Heart right ventricle (tissue), 16 donors: ENCODE measurements at regions of chr22 and their contacts with region 1.

Region 1: DNA sequence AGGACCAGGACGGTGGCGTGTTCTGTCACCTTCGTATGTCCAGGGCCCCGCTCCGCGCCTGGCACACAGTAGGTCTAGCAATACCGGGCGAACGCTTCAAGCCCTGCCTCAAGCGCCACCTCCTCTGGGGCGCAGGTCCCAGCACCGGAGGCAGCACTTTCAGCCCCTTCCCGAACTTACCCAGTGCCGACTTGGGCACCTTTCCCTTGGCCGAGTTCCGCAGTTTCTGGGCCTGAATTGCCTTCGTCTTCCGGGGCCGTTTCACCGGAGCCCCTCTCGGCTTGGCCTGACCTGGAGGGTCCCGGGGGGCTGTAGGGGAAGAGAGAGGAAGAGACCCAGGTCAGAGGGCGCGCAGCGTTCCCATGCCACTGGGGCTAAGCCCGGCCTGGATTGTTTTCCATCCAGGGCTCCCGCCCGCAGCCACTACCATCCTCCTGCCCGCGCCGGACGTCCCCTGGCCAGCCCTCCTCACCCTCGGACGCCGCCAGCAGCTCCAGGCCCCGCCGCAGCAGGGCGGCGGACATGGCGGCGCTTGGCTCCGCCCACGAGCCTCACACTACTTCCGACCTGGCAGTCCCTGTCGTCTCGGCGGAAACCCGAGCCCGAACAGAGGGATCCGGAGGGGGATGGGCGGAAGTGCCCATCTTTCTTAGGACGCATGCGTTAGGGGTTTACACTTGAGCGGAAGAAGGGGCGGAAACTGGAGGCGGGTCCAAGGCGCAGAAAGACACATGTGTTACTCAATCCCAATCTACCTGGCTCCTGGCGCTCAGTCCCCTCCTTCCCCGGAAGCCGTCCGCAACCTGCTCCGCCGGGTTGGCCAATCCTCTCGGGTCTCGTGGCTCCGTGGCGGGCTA is at the start of gene RPS19BP1:
- DNase-seq: peak; percentile 98 to 99
- ATAC-seq: peak; percentile 85 to 93 (median 90)
- H3K4me3 ChIP-seq: peak within 1 kb of the TSS; percentile 67 to 88 (median 74)
- H3K27ac ChIP-seq: peak within 1 kb of the TSS; percentile 88 to 98 (median 92)
- H3K4me1 ChIP-seq: peaks cover 25 to 62% (median 47%) of the 10 kb centered on the region in 9 donors
- H3K27me3 ChIP-seq: no peaks in the 10 kb centered on the region
- CTCF ChIP-seq: no peak
- total RNA-seq, gene RPS19BP1: 31.3 to 64.0 (median 37.2) TPM

Region 2: GRCh38 chr22:39170825-39171622 is 361.4 kb before region 1 on chr22:
- intact Hi-C with region 1: loop called in 7 of 10 experiments (anchors 5 to 10 kb)
- DNase-seq: peak; percentile 83 to 89
- ATAC-seq: peak; percentile 70 to 86 (median 82)
- H3K4me3 ChIP-seq: peak overlapping the region in 3 of 10 donors; percentile 10 to 23 (median 18)
- H3K27ac ChIP-seq: peak overlapping the region in 6 of 10 donors; percentile 0 to 92 (median 27)
- H3K4me1 ChIP-seq: peaks cover 32 to 57% (median 53%) of the 10 kb centered on the region in 9 donors
- H3K27me3 ChIP-seq: no peaks in the 10 kb centered on the region
- CTCF ChIP-seq: peak; percentile 93 to 97 (median 96)

Region 3: DNA sequence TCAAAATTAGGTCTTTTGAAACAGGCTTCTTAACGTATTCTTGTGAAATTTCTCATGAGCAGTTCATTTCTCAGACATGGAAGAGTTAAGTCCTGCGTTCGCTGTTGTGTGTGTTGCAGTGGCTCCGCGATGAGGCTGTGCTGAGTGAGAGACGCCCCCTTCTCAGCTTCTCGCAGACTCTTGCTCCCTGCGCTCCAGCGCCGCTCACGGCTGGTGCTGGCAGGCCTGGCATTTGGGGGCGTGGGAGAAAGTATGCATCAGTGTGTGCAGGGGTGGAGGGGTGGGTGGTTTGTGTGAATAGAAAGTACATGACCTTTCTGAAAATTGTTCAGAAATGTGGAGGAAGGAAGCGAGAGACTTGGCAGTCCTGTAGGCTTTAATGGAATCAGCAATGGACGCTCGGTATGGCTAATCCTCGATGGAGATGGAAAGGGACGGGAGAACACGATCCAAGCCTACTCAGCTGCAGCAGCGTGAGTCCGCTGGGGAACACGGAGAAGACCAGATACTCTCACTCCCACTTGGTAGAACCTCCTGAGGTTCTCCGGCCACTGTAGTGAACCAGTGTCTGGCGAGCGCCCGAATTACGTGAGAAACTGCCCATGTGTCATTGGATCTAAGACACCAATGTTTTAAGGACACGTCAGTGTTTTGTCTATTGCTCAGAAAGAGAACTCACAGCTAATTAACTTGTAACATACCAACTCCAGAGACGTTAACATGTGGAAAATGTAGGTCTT is 126.9 kb before region 1 on chr22:
- intact Hi-C with region 1: loop called in 2 of 10 experiments (anchors 5 kb)
- DNase-seq: no peak
- ATAC-seq: peak in 6 of 8 donors; percentile 47 to 66 (median 59)
- H3K4me3 ChIP-seq: peak overlapping the region in 4 of 10 donors; percentile 5 to 33 (median 20)
- H3K27ac ChIP-seq: peak overlapping the region in 4 of 10 donors; percentile 32 to 41 (median 37)
- H3K4me1 ChIP-seq: peaks cover 0 to 48% (median 20%) of the 10 kb centered on the region in 9 donors
- H3K27me3 ChIP-seq: no peaks in the 10 kb centered on the region
- CTCF ChIP-seq: peak in 1 of 9 donors; percentile 11

Region 4: GRCh38 chr22:39601180-39601535 is 68.7 kb after region 1 on chr22:
- intact Hi-C with region 1: no loop called
- DNase-seq: no peak
- ATAC-seq: no peak
- H3K4me3 ChIP-seq: no peak overlapping the region
- H3K27ac ChIP-seq: no peak overlapping the region
- H3K4me1 ChIP-seq: no peaks in the 10 kb centered on the region
- H3K27me3 ChIP-seq: peaks cover 0 to 63% (median 31%) of the 10 kb centered on the region in 7 donors
- CTCF ChIP-seq: no peak

Region 5: GRCh38 chr22:39625569-39626537 is 93.4 kb after region 1 on chr22:
- intact Hi-C with region 1: no loop called
- DNase-seq: no peak
- ATAC-seq: no peak
- H3K4me3 ChIP-seq: no peak overlapping the region
- H3K27ac ChIP-seq: no peak overlapping the region
- H3K4me1 ChIP-seq: no peaks in the 10 kb centered on the region
- H3K27me3 ChIP-seq: peaks cover 0 to 95% (median 91%) of the 10 kb centered on the region in 7 donors
- CTCF ChIP-seq: no peak

Region 6: DNA sequence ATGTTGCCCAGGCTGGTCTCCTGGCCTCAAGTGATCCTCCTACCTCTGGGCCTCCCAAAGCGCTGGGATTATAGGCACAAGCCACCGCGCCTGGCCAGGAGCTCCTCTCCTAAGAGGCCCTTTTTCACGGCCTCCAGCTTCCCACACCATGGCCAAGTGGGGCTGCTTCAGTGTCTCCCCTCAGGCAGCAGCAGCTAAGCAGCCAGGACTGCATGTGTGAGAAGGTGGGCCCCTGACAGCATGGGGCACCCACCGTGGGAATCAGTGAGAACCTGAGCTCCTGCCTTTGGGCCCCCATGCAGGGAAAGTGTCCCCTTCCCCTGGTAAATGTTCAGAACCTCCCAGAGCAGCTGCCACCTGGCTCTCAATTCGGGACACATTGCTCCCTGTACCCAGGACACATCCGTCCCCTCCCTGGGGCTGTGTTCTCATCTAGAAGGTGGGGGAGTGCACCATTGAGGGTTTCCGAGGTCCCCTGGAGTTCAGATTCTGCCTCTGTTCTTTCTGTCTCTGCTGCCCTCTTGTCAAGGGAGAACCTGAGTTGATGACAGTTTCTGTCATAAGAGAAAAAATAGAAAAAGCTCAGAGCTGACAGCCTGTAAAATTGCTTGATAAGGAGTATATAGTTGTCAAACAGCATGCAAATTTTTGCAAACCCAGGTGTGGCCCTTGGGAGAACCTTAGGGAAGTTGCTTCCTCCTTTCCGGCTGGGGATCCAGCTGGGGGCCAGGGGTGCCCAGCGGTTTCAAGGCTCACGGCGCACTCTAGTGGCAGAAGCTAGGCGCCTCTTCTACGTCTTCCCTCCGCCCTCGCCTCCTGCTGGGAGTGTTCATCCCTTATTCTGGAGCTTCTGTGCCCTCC is 492.0 kb after region 1 on chr22:
- intact Hi-C with region 1: loop called (anchors 1 to 5 kb)
- DNase-seq: peak; percentile 49 to 68
- ATAC-seq: peak in 7 of 8 donors; percentile 73 to 88 (median 82)
- H3K4me3 ChIP-seq: no peak overlapping the region
- H3K27ac ChIP-seq: no peak overlapping the region
- H3K4me1 ChIP-seq: peaks cover 0 to 8% (median 6%) of the 10 kb centered on the region in 9 donors
- H3K27me3 ChIP-seq: peaks cover 0 to 6% (median 0%) of the 10 kb centered on the region in 7 donors
- CTCF ChIP-seq: peak; percentile 74 to 95 (median 86)

Region 7: DNA sequence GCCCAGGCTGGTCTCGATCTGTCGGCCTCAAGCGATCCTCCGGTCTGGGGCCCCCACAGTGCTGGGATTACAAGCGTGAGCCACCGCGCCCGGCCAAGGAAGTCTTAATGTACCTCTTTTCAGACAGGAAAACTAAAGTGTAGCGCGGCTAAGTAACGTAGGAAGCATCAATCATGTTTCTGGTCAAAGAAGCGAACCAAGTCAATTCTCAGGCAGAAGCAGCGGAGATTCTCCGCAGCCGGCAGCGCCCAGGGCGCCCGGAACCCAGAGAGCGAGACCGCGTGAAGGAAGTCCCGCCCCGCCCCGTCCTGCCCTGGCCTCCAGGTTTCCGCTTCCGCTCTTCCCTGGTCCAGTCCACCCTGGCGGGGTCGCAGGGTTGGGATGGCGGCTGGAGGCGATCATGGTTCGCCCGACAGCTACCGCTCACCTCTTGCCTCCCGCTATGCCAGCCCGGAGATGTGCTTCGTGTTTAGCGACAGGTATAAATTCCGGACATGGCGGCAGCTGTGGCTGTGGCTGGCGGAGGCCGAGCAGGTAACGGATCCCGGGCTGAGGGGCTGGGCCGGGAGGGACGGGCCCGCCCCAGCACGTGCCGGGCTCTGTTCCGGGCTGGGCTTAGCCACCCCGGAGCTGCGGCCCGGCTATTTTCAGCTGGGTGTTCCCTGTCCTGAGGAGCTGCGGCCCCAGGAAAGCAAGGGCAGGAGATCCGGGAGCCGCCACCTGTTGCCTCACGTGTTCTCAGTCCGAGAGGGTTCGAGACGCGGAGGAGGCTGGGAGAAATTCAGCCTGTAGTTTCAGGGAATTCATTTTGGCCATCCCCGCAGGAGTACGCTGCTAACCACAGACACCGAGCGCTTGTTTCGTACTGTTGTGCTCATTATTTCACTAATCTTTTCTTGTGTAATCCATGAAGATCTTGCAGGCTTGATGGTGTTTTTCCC is 814.0 kb after region 1 on chr22 and contains the start of gene ADSL:
- intact Hi-C with region 1: loop called in 6 of 10 experiments (anchors 5 to 10 kb)
- DNase-seq: peak; percentile 90
- ATAC-seq: peak; percentile 98 to 99 (median 98)
- H3K4me3 ChIP-seq: peak within 1 kb of the TSS; percentile 56 to 89 (median 68)
- H3K27ac ChIP-seq: peak within 1 kb of the TSS; percentile 51 to 94 (median 87)
- H3K4me1 ChIP-seq: peaks cover 0 to 31% (median 21%) of the 10 kb centered on the region in 9 donors
- H3K27me3 ChIP-seq: no peaks in the 10 kb centered on the region
- CTCF ChIP-seq: peak in 4 of 9 donors; percentile 14 to 41 (median 37)
- total RNA-seq, gene ADSL: 45.9 to 65.5 (median 53.9) TPM